Ovary (tissue), 10 donors: ENCODE measurements at regions of chr13 and their contacts with region 1.

Region 1: DNA sequence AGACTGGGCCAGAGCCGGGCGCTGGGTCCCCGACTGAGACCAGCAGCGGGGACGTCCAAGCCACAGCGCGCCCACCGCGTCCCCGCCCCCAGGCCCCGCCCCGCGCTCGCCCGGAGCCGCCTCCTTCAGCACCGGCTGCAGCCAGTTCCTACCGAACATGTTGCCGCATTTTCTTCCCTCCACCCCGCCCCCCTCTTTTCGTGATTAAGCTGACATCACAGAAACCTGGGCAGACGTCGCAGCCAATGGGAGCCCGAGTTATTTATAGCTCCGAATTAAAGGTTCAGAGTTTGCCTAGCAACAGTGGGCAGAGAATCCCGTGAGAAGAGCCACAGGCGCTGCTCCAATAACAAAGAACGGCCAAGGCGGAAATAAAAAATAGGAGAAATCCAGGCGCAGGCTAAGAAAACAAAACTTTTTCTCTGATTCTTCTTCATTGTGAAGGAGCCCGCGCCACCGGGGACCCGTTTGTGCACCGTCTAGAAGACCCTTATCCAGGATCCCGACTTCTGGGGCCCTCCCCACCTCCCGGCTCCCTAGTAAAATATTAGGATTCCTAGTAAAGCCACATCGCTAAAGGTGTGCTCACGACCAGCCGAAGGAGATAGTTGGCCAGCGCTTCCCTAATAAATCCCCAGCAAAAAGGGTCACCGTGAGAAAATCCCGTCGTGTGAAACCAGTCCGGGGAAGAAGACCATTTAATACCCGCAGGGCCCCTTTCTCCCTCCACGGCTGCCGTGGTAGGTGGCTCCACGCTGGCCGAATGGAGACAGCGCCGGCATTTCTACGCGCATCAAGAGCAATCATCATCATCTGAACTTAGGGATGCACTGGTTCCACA is 61.7 kb downstream of the SERP2 start:
- DNase-seq: peak; percentile 96 to 98 (median 97)
- H3K4me3 ChIP-seq: peak overlapping the region; percentile 66
- H3K27ac ChIP-seq: peak overlapping the region; percentile 80 to 88
- H3K4me1 ChIP-seq: peaks cover 10% of the 10 kb centered on the region
- H3K27me3 ChIP-seq: no peaks in the 10 kb centered on the region
- CTCF ChIP-seq: peak in 1 of 3 donors; percentile 9
- EP300 ChIP-seq: no peak
- POLR2A ChIP-seq: peak; percentile 79

Region 2: GRCh38 chr13:43905435-43906031 is 529.8 kb before region 1 on chr13:
- intact Hi-C with region 1: loop called in 2 of 4 experiments (anchors 5 to 10 kb)
- DNase-seq: peak in 1 of 5 donors; percentile 44
- H3K4me3 ChIP-seq: no peak overlapping the region
- H3K27ac ChIP-seq: no peak overlapping the region
- H3K4me1 ChIP-seq: no peaks in the 10 kb centered on the region
- H3K27me3 ChIP-seq: no peaks in the 10 kb centered on the region
- CTCF ChIP-seq: peak in 2 of 3 donors; percentile 74 to 85
- EP300 ChIP-seq: no peak
- POLR2A ChIP-seq: no peak

Region 3: GRCh38 chr13:43915451-43915850 is 519.9 kb before region 1 on chr13:
- intact Hi-C with region 1: loop called in 1 of 4 experiments (anchors 10 kb)
- DNase-seq: no peak
- H3K4me3 ChIP-seq: no peak overlapping the region
- H3K27ac ChIP-seq: no peak overlapping the region
- H3K4me1 ChIP-seq: no peaks in the 10 kb centered on the region
- H3K27me3 ChIP-seq: no peaks in the 10 kb centered on the region
- CTCF ChIP-seq: no peak
- EP300 ChIP-seq: no peak
- POLR2A ChIP-seq: no peak

Region 4: DNA sequence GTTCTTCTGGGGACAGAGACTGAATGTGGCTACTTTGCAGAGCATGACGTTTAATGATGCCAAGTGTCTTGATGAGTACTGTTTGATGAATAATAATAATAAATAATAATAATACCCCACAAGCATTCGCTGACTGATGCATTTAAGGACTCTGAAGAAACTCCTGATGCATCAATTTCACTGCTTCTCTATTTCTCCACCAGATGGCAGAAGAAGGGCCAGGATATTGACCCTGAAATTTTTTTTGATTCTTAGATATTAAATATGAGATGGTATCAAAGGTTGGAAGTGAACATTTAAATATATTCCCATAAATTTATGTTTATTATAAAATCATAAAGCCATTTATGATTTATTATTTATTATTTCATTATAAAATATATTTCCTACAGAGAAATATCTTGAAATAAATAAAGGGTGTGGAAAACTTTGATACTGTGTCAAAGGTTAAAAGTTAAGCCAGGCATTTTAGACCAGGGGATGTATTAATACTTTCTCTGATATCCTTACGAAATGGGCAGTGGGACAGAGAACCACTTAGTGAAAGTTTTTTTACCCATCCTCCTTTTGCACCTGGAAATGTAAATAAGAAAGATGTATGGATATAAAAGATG is 384.8 kb before region 1 on chr13:
- intact Hi-C with region 1: loop called (anchors 5 kb)
- DNase-seq: no peak
- H3K4me3 ChIP-seq: no peak overlapping the region
- H3K27ac ChIP-seq: no peak overlapping the region
- H3K4me1 ChIP-seq: peaks cover 5% of the 10 kb centered on the region
- H3K27me3 ChIP-seq: no peaks in the 10 kb centered on the region
- CTCF ChIP-seq: peak; percentile 41 to 76 (median 61)
- EP300 ChIP-seq: no peak
- POLR2A ChIP-seq: no peak

Region 5: GRCh38 chr13:44141725-44142539 is 293.4 kb before region 1 on chr13:
- intact Hi-C with region 1: loop called in 2 of 4 experiments (anchors 5 to 10 kb)
- DNase-seq: peak; percentile 98 to 100 (median 99)
- H3K4me3 ChIP-seq: peak overlapping the region; percentile 67
- H3K27ac ChIP-seq: peak overlapping the region; percentile 77 to 83
- H3K4me1 ChIP-seq: peaks cover 7% of the 10 kb centered on the region
- H3K27me3 ChIP-seq: no peaks in the 10 kb centered on the region
- CTCF ChIP-seq: peak in 2 of 3 donors; percentile 44 to 58
- EP300 ChIP-seq: no peak
- POLR2A ChIP-seq: peak; percentile 95

Region 6: GRCh38 chr13:44219577-44220548 is 215.5 kb before region 1 on chr13:
- intact Hi-C with region 1: loop called in 1 of 4 experiments (anchors 10 kb)
- DNase-seq: no peak
- H3K4me3 ChIP-seq: no peak overlapping the region
- H3K27ac ChIP-seq: peak overlapping the region in 1 of 2 donors; percentile 7
- H3K4me1 ChIP-seq: peaks cover 10% of the 10 kb centered on the region
- H3K27me3 ChIP-seq: no peaks in the 10 kb centered on the region
- CTCF ChIP-seq: no peak
- EP300 ChIP-seq: no peak
- POLR2A ChIP-seq: no peak

Region 7: DNA sequence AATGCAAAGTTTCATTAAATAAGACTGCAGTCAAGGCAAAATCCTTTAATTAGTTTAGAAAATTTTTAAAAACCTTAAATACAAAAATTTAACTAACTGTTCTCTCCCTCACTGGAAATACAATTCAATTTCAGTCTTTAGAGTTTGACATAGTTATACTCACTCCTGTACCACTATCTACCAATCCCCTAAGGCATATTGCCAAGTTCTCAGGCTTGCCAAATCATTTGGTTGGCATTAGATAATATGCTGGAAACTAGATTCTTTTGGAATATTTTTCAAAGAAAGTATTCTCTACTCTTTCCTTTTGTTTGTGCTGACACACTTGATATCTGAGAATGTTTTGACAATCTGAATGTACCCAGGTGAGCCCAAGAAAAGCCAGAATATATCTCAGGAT is 63.6 kb after region 1 on chr13:
- intact Hi-C with region 1: no loop called
- DNase-seq: no peak
- H3K4me3 ChIP-seq: no peak overlapping the region
- H3K27ac ChIP-seq: no peak overlapping the region
- H3K4me1 ChIP-seq: no peaks in the 10 kb centered on the region
- H3K27me3 ChIP-seq: no peaks in the 10 kb centered on the region
- CTCF ChIP-seq: no peak
- EP300 ChIP-seq: no peak
- POLR2A ChIP-seq: no peak

Region 8: DNA sequence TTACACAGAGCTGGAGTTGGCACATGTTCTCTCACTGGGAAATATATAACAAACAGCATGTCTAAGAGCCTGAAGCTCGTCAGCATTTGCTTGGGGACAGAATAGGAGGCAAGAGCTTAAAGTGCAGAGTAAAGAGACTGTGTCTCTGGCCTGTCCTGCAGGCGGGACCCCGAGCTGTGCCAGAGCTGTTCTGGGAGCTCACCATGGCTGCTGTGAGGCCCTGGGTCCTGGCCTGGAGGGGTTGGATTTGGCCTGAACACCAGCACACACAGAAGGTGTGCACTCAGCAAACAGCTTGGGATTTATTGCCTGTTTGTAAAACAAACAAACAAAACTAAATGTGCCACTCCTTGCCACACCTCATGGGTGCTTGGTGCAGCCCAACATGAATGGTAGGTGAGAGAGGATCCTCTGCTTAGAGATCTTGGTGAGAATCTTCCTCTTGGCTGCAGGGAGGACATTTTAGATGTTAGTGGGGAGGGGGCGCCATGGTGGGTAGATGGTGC is 1119.3 kb after region 1 on chr13:
- intact Hi-C with region 1: no loop called
- DNase-seq: no peak
- H3K4me3 ChIP-seq: no peak overlapping the region
- H3K27ac ChIP-seq: no peak overlapping the region
- H3K4me1 ChIP-seq: no peaks in the 10 kb centered on the region
- H3K27me3 ChIP-seq: no peaks in the 10 kb centered on the region
- CTCF ChIP-seq: no peak
- EP300 ChIP-seq: no peak
- POLR2A ChIP-seq: no peak